Right lobe of liver (tissue), 6 donors: ENCODE measurements at regions of chr7 and their contacts with region 1.

Region 1: GRCh38 chr7:16579216-16579615 is 52.6 kb downstream of the LRRC72 start:
- DNase-seq: no peak
- ATAC-seq: no peak
- H3K4me3 ChIP-seq: no peak overlapping the region
- H3K27ac ChIP-seq: no peak overlapping the region
- H3K4me1 ChIP-seq: no peaks in the 10 kb centered on the region
- H3K27me3 ChIP-seq: no peaks in the 10 kb centered on the region
- CTCF ChIP-seq: no peak
- POLR2A ChIP-seq: no peak

Region 2: GRCh38 chr7:16098585-16099179 is 480.5 kb before region 1 on chr7:
- intact Hi-C with region 1: loop called in 1 of 2 experiments (anchors 10 kb)
- DNase-seq: no peak
- ATAC-seq: peak in 1 of 4 donors; percentile 39
- H3K4me3 ChIP-seq: no peak overlapping the region
- H3K27ac ChIP-seq: no peak overlapping the region
- H3K4me1 ChIP-seq: no peaks in the 10 kb centered on the region
- H3K27me3 ChIP-seq: no peaks in the 10 kb centered on the region
- CTCF ChIP-seq: peak; percentile 45 to 64 (median 57)
- POLR2A ChIP-seq: no peak

Region 3: DNA sequence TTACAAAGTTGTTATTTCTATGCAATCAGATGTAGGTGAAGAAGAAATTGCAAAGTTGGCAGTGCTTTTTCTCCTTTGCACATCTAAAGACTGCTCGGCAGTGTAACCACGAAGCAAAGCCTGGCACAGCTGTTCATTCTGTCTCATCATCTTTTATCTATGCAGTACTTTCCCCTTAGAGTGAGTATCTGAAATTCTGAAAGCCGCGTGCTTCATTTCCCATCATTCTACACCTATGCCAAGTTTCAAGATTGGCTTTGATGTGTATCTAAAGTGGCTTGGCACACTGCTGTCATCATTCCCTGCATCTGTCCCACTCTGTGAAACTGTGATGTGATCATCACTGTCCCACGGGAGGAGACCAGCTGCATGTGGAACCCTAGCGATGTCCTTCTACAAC is 128.8 kb before region 1 on chr7:
- intact Hi-C with region 1: no loop called
- DNase-seq: no peak
- ATAC-seq: no peak
- H3K4me3 ChIP-seq: no peak overlapping the region
- H3K27ac ChIP-seq: no peak overlapping the region
- H3K4me1 ChIP-seq: no peaks in the 10 kb centered on the region
- H3K27me3 ChIP-seq: no peaks in the 10 kb centered on the region
- CTCF ChIP-seq: no peak
- POLR2A ChIP-seq: no peak